ENCODE measurements at regions of chr7 and their contacts with region 1.

Region 1: GRCh38 chr7:47945261-47946001 is 2.8 kb downstream of the PKD1L1 start:
- DNase-seq: peak; percentile 87
- ATAC-seq: peak; percentile 58
- H3K4me3 Mint-ChIP-seq: no peak overlapping the region
- H3K27ac Mint-ChIP-seq: no peak overlapping the region
- H3K4me1 Mint-ChIP-seq: no peaks in the 10 kb centered on the region
- H3K27me3 Mint-ChIP-seq: no peaks in the 10 kb centered on the region

Region 2: GRCh38 chr7:47227762-47228177 is 717.7 kb before region 1 on chr7:
- CTCF ChIA-PET with region 1: no interaction called
- POLR2A ChIA-PET with region 1: no interaction called
- intact Hi-C with region 1: no loop called
- DNase-seq: no peak
- ATAC-seq: no peak
- H3K4me3 Mint-ChIP-seq: no peak overlapping the region
- H3K27ac Mint-ChIP-seq: no peak overlapping the region
- H3K4me1 Mint-ChIP-seq: no peaks in the 10 kb centered on the region
- H3K27me3 Mint-ChIP-seq: peaks cover 2% of the 10 kb centered on the region

Region 3: DNA sequence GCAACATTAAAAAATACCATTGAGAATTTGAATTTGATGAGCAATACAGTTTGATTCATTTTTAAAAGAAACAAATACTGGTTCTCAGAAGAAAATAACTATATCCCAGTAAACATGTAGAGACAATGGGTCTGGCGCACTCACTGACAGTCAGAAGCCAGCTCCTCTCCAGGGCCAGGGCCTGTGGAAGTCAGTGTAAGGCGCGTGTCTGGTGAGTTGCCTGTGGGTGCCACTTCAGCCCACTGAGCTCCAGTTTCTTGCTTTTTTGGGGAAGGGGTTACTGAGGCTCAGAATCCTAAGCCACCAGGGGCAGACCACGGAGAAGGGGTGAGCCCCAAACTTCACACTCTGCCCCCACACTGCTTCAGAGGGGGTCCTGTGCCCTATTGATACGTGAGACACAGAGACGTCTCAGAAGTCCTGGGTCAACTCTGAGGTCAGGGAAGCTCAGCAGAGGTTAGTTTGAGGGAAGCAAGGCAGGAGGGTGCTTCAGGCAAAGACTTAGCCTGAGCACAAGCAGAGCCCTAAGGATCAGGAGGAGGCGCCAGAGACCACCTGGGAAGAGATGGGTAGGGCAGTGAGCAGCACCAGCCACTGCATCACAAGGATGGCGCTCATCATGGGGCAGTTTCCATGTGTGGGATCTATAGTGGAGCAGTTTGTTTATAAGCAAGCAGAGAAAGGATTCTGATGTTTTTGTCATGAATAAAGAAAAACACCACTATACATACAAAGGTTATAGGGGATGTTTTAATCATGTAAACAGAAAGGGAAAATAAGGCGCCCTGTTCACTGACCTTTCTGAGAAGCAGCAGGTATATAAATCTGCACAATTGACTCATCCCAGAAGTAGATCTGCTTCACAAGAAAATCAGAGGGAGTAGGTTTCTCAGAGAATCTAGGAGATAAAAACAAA is 92.8 kb before region 1 on chr7:
- CTCF ChIA-PET with region 1: no interaction called
- POLR2A ChIA-PET with region 1: no interaction called
- intact Hi-C with region 1: loop called in 1 of 2 experiments (anchors 5 kb)
- DNase-seq: peak; percentile 30
- ATAC-seq: peak; percentile 60
- H3K4me3 Mint-ChIP-seq: no peak overlapping the region
- H3K27ac Mint-ChIP-seq: no peak overlapping the region
- H3K4me1 Mint-ChIP-seq: no peaks in the 10 kb centered on the region
- H3K27me3 Mint-ChIP-seq: no peaks in the 10 kb centered on the region

Region 4: DNA sequence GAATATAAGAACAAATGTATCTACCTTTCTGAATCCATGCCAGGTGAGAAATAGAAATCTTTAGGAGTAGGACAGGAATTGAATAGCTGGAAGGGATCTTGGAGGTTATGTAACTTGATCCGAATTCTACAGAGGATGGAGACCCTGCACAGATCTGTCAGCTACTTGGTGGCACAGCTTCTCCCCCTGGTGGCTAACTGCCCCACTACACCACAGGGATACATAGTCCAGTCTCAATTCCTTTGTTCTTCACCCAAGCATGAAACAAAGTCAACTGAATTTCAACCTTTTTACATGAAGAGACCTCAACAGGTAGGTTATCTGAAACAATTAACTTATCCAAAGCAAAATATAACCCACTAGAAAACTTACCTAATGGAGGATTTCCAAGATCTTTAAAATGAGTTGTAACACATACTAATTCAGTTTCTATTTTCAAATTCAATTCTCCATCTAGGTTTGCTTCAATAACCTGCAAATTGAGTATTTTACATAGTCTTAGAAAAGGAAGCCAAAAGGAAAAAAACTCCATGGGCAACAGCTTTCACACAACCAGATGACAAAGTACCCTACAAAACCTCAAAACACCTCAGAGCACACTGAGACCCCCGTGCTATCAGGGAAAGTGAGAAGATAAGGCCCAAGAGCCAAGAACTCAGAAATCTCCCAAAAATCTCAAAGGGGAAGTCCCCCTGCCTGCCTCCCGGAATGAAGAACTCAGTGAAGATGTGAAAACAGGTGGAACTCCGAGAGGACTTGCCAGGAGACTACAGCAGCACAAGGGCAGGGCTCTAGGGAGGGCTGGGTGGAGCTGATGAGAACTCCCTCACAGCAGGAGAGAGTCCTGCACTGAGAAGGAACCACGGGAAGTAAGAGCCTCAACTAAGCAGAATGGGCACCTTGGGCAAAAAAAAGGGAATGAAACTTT is 23.7 kb after region 1 on chr7:
- CTCF ChIA-PET with region 1: interaction called, 20 read pairs
- POLR2A ChIA-PET with region 1: no interaction called
- intact Hi-C with region 1: loop called in 1 of 2 experiments (anchors 2 kb)
- DNase-seq: peak; percentile 76
- ATAC-seq: peak; percentile 59
- H3K4me3 Mint-ChIP-seq: no peak overlapping the region
- H3K27ac Mint-ChIP-seq: no peak overlapping the region
- H3K4me1 Mint-ChIP-seq: peaks cover 32% of the 10 kb centered on the region
- H3K27me3 Mint-ChIP-seq: no peaks in the 10 kb centered on the region

Region 5: GRCh38 chr7:48109848-48110663 is 164.6 kb after region 1 on chr7:
- CTCF ChIA-PET with region 1: interaction called, 51 read pairs
- POLR2A ChIA-PET with region 1: no interaction called
- intact Hi-C with region 1: loop called (anchors 1 kb)
- DNase-seq: peak; percentile 93
- ATAC-seq: peak; percentile 93
- H3K4me3 Mint-ChIP-seq: no peak overlapping the region
- H3K27ac Mint-ChIP-seq: no peak overlapping the region
- H3K4me1 Mint-ChIP-seq: peaks cover 10% of the 10 kb centered on the region
- H3K27me3 Mint-ChIP-seq: no peaks in the 10 kb centered on the region

Region 6: GRCh38 chr7:49852619-49853462 is 1907.4 kb after region 1 on chr7:
- CTCF ChIA-PET with region 1: no interaction called
- POLR2A ChIA-PET with region 1: no interaction called
- intact Hi-C with region 1: loop called in 1 of 2 experiments (anchors 5 kb)
- DNase-seq: peak; percentile 39
- ATAC-seq: peak; percentile 74
- H3K4me3 Mint-ChIP-seq: no peak overlapping the region
- H3K27ac Mint-ChIP-seq: no peak overlapping the region
- H3K4me1 Mint-ChIP-seq: no peaks in the 10 kb centered on the region
- H3K27me3 Mint-ChIP-seq: no peaks in the 10 kb centered on the region

Measured in activated CD4-positive, alpha-beta T cell treated with anti-CD3 and anti-CD28 coated beads for 36 hours (primary cell).